Activated CD8-positive, alpha-beta T cell treated with anti-CD3 and anti-CD28 coated beads, Interleukin-2, amount 10 ng/mL, durations not matched to agents 7 days and 5 days (primary cell): ENCODE measurements at regions of chr4 and their contacts with region 1.

Region 1: DNA sequence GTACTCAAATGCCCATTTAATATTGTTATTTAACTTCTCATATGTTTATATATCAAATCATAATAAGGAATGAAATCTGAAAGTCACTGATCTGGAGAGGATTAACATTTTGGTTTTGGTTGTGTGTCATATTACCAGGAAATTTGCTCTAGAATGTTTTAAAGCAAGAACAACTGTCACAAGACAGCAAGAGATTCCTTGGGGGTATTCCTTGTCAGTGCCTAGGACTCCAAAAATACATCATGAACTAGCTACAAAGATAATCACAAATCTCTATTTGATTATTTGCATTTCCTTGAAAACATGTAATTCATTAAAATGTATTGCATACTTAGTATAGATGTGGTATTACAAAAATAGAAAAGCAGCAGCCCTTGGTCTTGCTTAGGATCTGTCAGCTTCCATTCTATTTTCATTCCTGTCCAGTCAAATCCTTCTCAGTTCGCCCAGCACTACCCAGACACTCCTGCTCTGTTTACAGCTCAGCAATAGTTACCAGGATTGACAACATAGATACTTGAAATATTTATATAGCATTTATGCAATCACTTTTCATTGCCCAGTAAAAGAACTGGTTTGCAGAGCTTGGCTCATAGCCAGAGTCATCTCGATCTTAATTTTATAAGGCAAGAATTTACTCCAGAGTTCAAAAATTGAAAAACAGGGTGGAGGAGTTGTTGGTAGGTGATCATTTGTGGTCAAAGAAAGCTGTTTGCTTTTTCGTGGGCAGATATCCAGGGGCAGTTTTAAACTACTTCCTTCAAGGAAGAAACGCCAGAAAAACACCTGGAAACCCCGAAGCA is 9.2 kb upstream of the BMP3 start:
- DNase-seq: no peak
- ATAC-seq: no peak
- H3K4me3 Mint-ChIP-seq: no peak overlapping the region
- H3K27ac Mint-ChIP-seq: no peak overlapping the region
- H3K4me1 Mint-ChIP-seq: no peaks in the 10 kb centered on the region
- H3K27me3 Mint-ChIP-seq: peaks cover 13% of the 10 kb centered on the region

Region 2: GRCh38 chr4:80931631-80932081 is 89.7 kb before region 1 on chr4:
- CTCF ChIA-PET with region 1: no interaction called
- POLR2A ChIA-PET with region 1: no interaction called
- DNase-seq: no peak
- ATAC-seq: no peak
- H3K4me3 Mint-ChIP-seq: no peak overlapping the region
- H3K27ac Mint-ChIP-seq: no peak overlapping the region
- H3K4me1 Mint-ChIP-seq: no peaks in the 10 kb centered on the region
- H3K27me3 Mint-ChIP-seq: no peaks in the 10 kb centered on the region

Region 3: GRCh38 chr4:80980239-80980638 is 41.1 kb before region 1 on chr4:
- CTCF ChIA-PET with region 1: no interaction called
- POLR2A ChIA-PET with region 1: no interaction called
- DNase-seq: no peak
- ATAC-seq: no peak
- H3K4me3 Mint-ChIP-seq: no peak overlapping the region
- H3K27ac Mint-ChIP-seq: no peak overlapping the region
- H3K4me1 Mint-ChIP-seq: no peaks in the 10 kb centered on the region
- H3K27me3 Mint-ChIP-seq: peaks cover 7% of the 10 kb centered on the region

Region 4: GRCh38 chr4:81040012-81040659 is 18.8 kb after region 1 on chr4:
- CTCF ChIA-PET with region 1: interaction called, 10 read pairs
- POLR2A ChIA-PET with region 1: no interaction called
- DNase-seq: no peak
- ATAC-seq: no peak
- H3K4me3 Mint-ChIP-seq: no peak overlapping the region
- H3K27ac Mint-ChIP-seq: no peak overlapping the region
- H3K4me1 Mint-ChIP-seq: no peaks in the 10 kb centered on the region
- H3K27me3 Mint-ChIP-seq: peaks cover 18% of the 10 kb centered on the region

Region 5: GRCh38 chr4:81136161-81136905 is 115.0 kb after region 1 on chr4:
- CTCF ChIA-PET with region 1: no interaction called
- POLR2A ChIA-PET with region 1: no interaction called
- DNase-seq: no peak
- ATAC-seq: no peak
- H3K4me3 Mint-ChIP-seq: no peak overlapping the region
- H3K27ac Mint-ChIP-seq: no peak overlapping the region
- H3K4me1 Mint-ChIP-seq: no peaks in the 10 kb centered on the region
- H3K27me3 Mint-ChIP-seq: no peaks in the 10 kb centered on the region

Region 6: GRCh38 chr4:81260443-81261101 is 239.2 kb after region 1 on chr4:
- CTCF ChIA-PET with region 1: no interaction called
- POLR2A ChIA-PET with region 1: no interaction called
- DNase-seq: no peak
- ATAC-seq: no peak
- H3K4me3 Mint-ChIP-seq: no peak overlapping the region
- H3K27ac Mint-ChIP-seq: no peak overlapping the region
- H3K4me1 Mint-ChIP-seq: no peaks in the 10 kb centered on the region
- H3K27me3 Mint-ChIP-seq: no peaks in the 10 kb centered on the region